Psoas muscle (tissue), 8 donors: ENCODE measurements at regions of chr17 and their contacts with region 1.

Region 1: GRCh38 chr17:74394977-74395376 is 27.7 kb downstream of the GPR142 start:
- DNase-seq: peak; percentile 56 to 86
- ATAC-seq: peak; percentile 93 to 94 (median 94)
- H3K4me3 ChIP-seq: peak overlapping the region; percentile 22
- H3K27ac ChIP-seq: peak overlapping the region; percentile 93
- H3K4me1 ChIP-seq: peaks cover 38% of the 10 kb centered on the region
- H3K27me3 ChIP-seq: no peaks in the 10 kb centered on the region
- CTCF ChIP-seq: no peak

Region 2: GRCh38 chr17:74089869-74090464 is 305.0 kb before region 1 on chr17:
- intact Hi-C with region 1: no loop called
- DNase-seq: no peak
- ATAC-seq: no peak
- H3K4me3 ChIP-seq: no peak overlapping the region
- H3K27ac ChIP-seq: no peak overlapping the region
- H3K4me1 ChIP-seq: no peaks in the 10 kb centered on the region
- H3K27me3 ChIP-seq: peaks cover 0 to 2% (median 0%) of the 10 kb centered on the region in 3 donors
- CTCF ChIP-seq: peak; percentile 16

Region 3: GRCh38 chr17:74430706-74431567 is 36.0 kb after region 1 on chr17:
- intact Hi-C with region 1: loop called in 1 of 2 experiments (anchors 5 kb)
- DNase-seq: peak; percentile 93 to 97
- ATAC-seq: peak; percentile 75 to 82 (median 78)
- H3K4me3 ChIP-seq: peak overlapping the region; percentile 90
- H3K27ac ChIP-seq: peak overlapping the region; percentile 98
- H3K4me1 ChIP-seq: peaks cover 42% of the 10 kb centered on the region
- H3K27me3 ChIP-seq: peaks cover 0 to 2% (median 0%) of the 10 kb centered on the region in 3 donors
- CTCF ChIP-seq: no peak